A549 (cell line): ENCODE measurements at regions of chr10 and their contacts with region 1.

Region 1: GRCh38 chr10:130190055-130190736 is 54.0 kb downstream of the GLRX3 start:
- DNase-seq: peak; percentile 71 to 84
- ATAC-seq: peak; percentile 74 to 90
- H3K4me3 ChIP-seq: peak overlapping the region; percentile 52
- H3K27ac ChIP-seq: peak overlapping the region; percentile 66 to 89
- H3K4me1 ChIP-seq: no peaks in the 10 kb centered on the region
- CTCF ChIP-seq: peak; percentile 99
- EP300 ChIP-seq: no peak
- POLR2A ChIP-seq: no peak
- RAD21 ChIP-seq: peak; percentile 82 to 93

Region 2: GRCh38 chr10:130169136-130169859 is 20.9 kb before region 1 on chr10:
- CTCF ChIA-PET with region 1: interaction called, 37 read pairs
- POLR2A ChIA-PET with region 1: no interaction called
- DNase-seq: no peak
- ATAC-seq: no peak
- H3K4me3 ChIP-seq: no peak overlapping the region
- H3K27ac ChIP-seq: no peak overlapping the region
- H3K4me1 ChIP-seq: no peaks in the 10 kb centered on the region
- CTCF ChIP-seq: no peak
- EP300 ChIP-seq: no peak
- POLR2A ChIP-seq: no peak
- RAD21 ChIP-seq: no peak

Region 3: DNA sequence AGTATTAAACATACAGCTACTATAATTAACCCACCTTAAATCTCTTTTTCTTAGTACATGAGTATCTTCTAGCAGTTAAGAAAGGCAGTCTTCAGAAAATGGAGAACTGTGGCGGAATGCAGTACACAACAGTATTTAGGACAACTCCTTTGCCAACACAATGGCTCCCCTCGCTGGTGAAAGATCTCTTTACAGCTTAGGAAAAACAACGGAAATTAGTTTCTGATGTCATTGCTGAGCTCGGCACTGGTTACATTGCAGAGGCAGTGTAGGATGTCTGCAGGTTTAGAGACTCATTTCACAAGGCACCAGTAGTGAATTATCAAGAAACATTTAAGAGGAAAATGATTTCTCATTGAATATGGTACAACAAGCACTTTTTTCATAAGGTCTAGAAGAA is 10.6 kb before region 1 on chr10:
- CTCF ChIA-PET with region 1: interaction called, 37 read pairs
- POLR2A ChIA-PET with region 1: no interaction called
- DNase-seq: peak; percentile 17 to 65
- ATAC-seq: peak; percentile 83 to 89; a peak in 5 of 6 replicates
- H3K4me3 ChIP-seq: no peak overlapping the region
- H3K27ac ChIP-seq: no peak overlapping the region
- H3K4me1 ChIP-seq: no peaks in the 10 kb centered on the region
- CTCF ChIP-seq: peak; percentile 34
- EP300 ChIP-seq: no peak
- POLR2A ChIP-seq: no peak
- RAD21 ChIP-seq: peak; percentile 42 to 50; a peak in 4 of 5 replicates

Region 4: GRCh38 chr10:130200179-130201052 is 10.2 kb after region 1 on chr10:
- CTCF ChIA-PET with region 1: interaction called, 25 read pairs
- POLR2A ChIA-PET with region 1: no interaction called
- DNase-seq: no peak
- ATAC-seq: no peak; a peak in 1 of 6 replicates
- H3K4me3 ChIP-seq: no peak overlapping the region
- H3K27ac ChIP-seq: no peak overlapping the region
- H3K4me1 ChIP-seq: 0 out of 3 replicates have a peak, but pooled peaks cover 3% of the 10 kb centered on the region
- CTCF ChIP-seq: no peak
- EP300 ChIP-seq: no peak
- POLR2A ChIP-seq: no peak
- RAD21 ChIP-seq: no peak